ENCODE measurements at regions of chr22 and their contacts with region 1.

Region 1: DNA sequence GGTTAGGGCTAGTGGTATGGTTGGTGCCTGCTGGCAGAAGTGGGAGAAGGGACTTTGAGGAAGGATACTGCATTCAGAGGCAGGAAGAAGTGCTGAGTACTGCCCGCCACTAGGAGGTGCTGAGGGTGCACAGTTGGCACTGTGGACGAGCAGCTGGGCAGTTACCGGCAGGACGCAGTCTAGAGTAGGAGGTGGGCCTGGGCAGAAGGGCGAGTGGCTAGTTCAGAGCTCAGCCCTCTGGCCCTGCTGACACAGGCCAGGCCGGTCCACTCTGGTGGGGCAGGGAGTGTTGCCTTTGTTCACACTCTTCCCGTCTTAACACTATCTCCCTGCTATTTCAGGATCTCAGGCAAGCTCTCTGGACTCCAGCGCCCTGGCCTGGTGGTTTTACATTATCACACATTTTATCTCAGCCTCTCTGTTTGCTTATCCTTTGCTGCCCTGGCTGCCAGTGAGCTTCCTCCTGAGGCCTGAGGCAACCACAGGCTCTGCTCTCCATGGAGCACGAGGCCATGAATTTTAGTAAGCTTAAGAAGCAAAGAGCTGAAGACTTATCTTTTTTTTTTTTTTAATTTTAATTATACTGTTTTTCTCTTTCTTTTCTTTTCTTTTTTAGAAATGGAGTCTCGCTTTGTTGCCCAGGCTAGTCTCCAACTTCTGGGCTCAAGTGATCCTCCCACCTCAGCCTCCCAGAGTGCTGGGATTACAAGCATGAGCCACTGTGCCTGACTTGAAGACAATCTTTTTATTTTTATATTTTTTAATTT is 26.9 kb downstream of the SNAP29 start:
- DNase-seq: peak; percentile 69 to 90
- H3K4me3 ChIP-seq: no peak overlapping the region
- H3K27ac ChIP-seq: no peak overlapping the region
- H3K4me1 ChIP-seq: peaks cover 0 to 2% (median 0%) of the 10 kb centered on the region in 4 experiments; a peak in 1 of 7 replicates
- H3K27me3 ChIP-seq: no peaks in the 10 kb centered on the region
- CTCF ChIP-seq: peak; percentile 97 to 100 (median 100)
- EP300 ChIP-seq: no peak
- POLR2A ChIP-seq: no peak
- RAD21 ChIP-seq: peak; percentile 95

Region 2: GRCh38 chr22:20729194-20729798 is 156.4 kb before region 1 on chr22:
- CTCF ChIA-PET with region 1: no interaction called
- POLR2A ChIA-PET with region 1: no interaction called
- DNase-seq: no peak
- H3K4me3 ChIP-seq: no peak overlapping the region
- H3K27ac ChIP-seq: no peak overlapping the region
- H3K4me1 ChIP-seq: no peaks in the 10 kb centered on the region
- H3K27me3 ChIP-seq: no peaks in the 10 kb centered on the region
- CTCF ChIP-seq: peak in 2 of 3 experiments; percentile 35 to 50; a peak in 3 of 4 replicates
- EP300 ChIP-seq: no peak
- POLR2A ChIP-seq: no peak
- RAD21 ChIP-seq: no peak

Region 3: DNA sequence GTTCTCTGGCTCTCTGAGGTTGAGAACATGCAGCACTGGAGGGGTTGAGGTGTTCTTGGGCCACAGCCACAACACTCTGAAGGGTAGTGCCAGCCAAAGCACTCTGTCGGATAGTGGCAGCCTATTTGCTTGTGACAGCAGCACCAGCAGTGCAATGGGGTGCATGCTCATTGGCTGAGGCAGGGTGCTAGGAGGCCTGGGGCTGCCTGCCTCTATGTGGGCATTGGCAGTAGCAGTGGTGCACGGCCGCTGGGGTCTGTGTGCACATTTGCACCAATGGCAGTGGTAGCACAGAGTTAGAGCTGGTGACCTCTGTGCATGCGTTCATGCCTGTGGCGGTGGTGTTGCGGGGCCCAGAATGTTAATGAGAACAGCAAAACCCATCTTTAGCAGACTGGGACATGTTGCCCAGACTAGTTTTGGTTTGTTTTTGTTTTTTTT is 52.5 kb before region 1 on chr22:
- CTCF ChIA-PET with region 1: no interaction called
- POLR2A ChIA-PET with region 1: no interaction called
- DNase-seq: no peak
- H3K4me3 ChIP-seq: no peak overlapping the region
- H3K27ac ChIP-seq: no peak overlapping the region
- H3K4me1 ChIP-seq: no peaks in the 10 kb centered on the region
- H3K27me3 ChIP-seq: no peaks in the 10 kb centered on the region
- CTCF ChIP-seq: no peak
- EP300 ChIP-seq: no peak
- POLR2A ChIP-seq: no peak
- RAD21 ChIP-seq: no peak

Region 4: GRCh38 chr22:20867179-20868024 is 18.3 kb before region 1 on chr22:
- CTCF ChIA-PET with region 1: interaction called, 18 read pairs
- POLR2A ChIA-PET with region 1: no interaction called
- DNase-seq: no peak
- H3K4me3 ChIP-seq: no peak overlapping the region
- H3K27ac ChIP-seq: no peak overlapping the region
- H3K4me1 ChIP-seq: no peaks in the 10 kb centered on the region; a peak in 1 of 7 replicates
- H3K27me3 ChIP-seq: no peaks in the 10 kb centered on the region
- CTCF ChIP-seq: no peak
- EP300 ChIP-seq: no peak
- POLR2A ChIP-seq: no peak
- RAD21 ChIP-seq: no peak

Region 5: GRCh38 chr22:20899827-20900423 is 14.2 kb after region 1 on chr22:
- CTCF ChIA-PET with region 1: interaction called, 13 read pairs
- POLR2A ChIA-PET with region 1: interaction called, 3 read pairs
- DNase-seq: no peak
- H3K4me3 ChIP-seq: no peak overlapping the region
- H3K27ac ChIP-seq: no peak overlapping the region
- H3K4me1 ChIP-seq: no peaks in the 10 kb centered on the region
- H3K27me3 ChIP-seq: no peaks in the 10 kb centered on the region; a peak in 1 of 7 replicates
- CTCF ChIP-seq: no peak
- EP300 ChIP-seq: no peak
- POLR2A ChIP-seq: no peak
- RAD21 ChIP-seq: no peak

Region 6: DNA sequence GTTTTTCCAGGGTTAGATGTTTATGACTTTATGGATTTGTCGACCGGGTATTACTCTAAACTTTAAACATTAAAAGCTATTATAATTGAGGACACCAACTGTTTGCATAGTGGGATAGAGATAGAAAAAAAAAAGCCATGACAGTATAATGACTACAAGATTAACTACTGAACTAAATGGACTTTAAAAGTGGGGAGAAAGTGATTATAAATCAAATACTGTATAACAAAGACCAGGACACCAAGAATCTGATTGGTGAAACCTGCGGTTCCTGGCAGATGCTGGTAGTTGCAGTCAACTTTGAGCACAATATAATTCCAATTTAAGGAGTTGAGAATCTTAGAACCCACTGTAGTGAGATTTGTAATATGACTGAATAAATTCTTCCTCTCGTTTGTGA is 34.0 kb after region 1 on chr22:
- CTCF ChIA-PET with region 1: interaction called, 22 read pairs
- POLR2A ChIA-PET with region 1: interaction called, 3 read pairs
- DNase-seq: no peak
- H3K4me3 ChIP-seq: peak overlapping the region; percentile 92 to 98 (median 96); a peak in 7 of 8 replicates
- H3K27ac ChIP-seq: no peak overlapping the region
- H3K4me1 ChIP-seq: peaks cover 0 to 3% (median 1%) of the 10 kb centered on the region in 4 experiments; a peak in 5 of 7 replicates
- H3K27me3 ChIP-seq: no peaks in the 10 kb centered on the region
- CTCF ChIP-seq: no peak
- EP300 ChIP-seq: no peak
- POLR2A ChIP-seq: no peak
- RAD21 ChIP-seq: no peak

Region 7: GRCh38 chr22:20968281-20968977 is 82.7 kb after region 1 on chr22:
- CTCF ChIA-PET with region 1: interaction called, 12 read pairs
- POLR2A ChIA-PET with region 1: no interaction called
- DNase-seq: peak in 1 of 2 experiments; percentile 54
- H3K4me3 ChIP-seq: peak overlapping the region in 1 of 4 experiments; percentile 39; a peak in 2 of 8 replicates
- H3K27ac ChIP-seq: no peak overlapping the region
- H3K4me1 ChIP-seq: peaks cover 0 to 19% (median 13%) of the 10 kb centered on the region in 4 experiments; a peak in 6 of 7 replicates
- H3K27me3 ChIP-seq: peaks cover 31 to 64% (median 50%) of the 10 kb centered on the region in 4 experiments
- CTCF ChIP-seq: no peak
- EP300 ChIP-seq: no peak
- POLR2A ChIP-seq: no peak
- RAD21 ChIP-seq: no peak